Gastrocnemius medialis (tissue), 4 donors: ENCODE measurements at regions of chr5 and their contacts with region 1.

Region 1: GRCh38 chr5:60479543-60479942 is 220.4 kb downstream of the DEPDC1B start:
- DNase-seq: no peak
- ATAC-seq: no peak
- H3K4me3 ChIP-seq: no peak overlapping the region
- H3K27ac ChIP-seq: no peak overlapping the region
- H3K4me1 ChIP-seq: no peaks in the 10 kb centered on the region
- H3K27me3 ChIP-seq: no peaks in the 10 kb centered on the region
- CTCF ChIP-seq: no peak
- POLR2A ChIP-seq: no peak

Region 2: DNA sequence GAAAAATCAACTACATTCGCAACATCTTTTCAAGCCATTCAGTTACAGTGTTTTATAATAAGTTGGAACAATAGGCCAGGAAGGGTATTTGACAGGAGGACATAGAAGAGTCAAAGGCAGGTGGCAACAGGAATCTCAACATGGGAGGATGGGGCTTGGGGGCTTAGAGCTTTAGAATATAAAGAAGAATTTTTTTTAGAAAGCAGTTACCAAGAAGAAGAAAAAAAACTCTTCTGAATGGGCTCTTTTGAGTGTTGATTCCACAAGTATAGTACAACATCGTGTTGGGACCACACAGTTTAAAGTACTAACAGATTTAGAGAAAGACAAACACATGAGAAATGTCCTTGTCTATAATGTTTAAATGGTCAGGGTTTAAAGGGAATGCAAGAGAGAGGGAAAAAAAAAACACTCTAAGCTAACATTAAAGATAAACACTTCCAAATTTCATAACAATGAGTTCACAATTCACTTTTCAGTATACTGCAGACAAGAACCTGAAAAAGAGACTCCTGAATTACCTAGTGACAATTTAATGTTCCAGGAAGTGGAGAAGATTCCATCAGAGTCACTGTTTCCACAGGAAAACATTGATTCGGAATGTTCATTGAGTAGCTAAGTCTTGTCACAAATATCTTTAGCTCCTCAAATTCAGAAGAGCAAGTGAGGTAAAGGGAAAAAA is 61.9 kb before region 1 on chr5:
- in situ Hi-C with region 1: loop called in 1 of 4 experiments (anchors 5 kb)
- intact Hi-C with region 1: no loop called
- DNase-seq: no peak
- ATAC-seq: no peak
- H3K4me3 ChIP-seq: no peak overlapping the region
- H3K27ac ChIP-seq: no peak overlapping the region
- H3K4me1 ChIP-seq: no peaks in the 10 kb centered on the region
- H3K27me3 ChIP-seq: no peaks in the 10 kb centered on the region
- CTCF ChIP-seq: no peak
- POLR2A ChIP-seq: no peak